Activated CD8-positive, alpha-beta T cell treated with anti-CD3 and anti-CD28 coated beads, Interleukin-2, amount 10 ng/mL, durations not matched to agents 7 days and 5 days (primary cell): ENCODE measurements at regions of chr21 and their contacts with region 1.

Region 1: GRCh38 chr21:45140346-45140940 is 66.1 kb downstream of the ADARB1 start:
- DNase-seq: peak; percentile 82
- ATAC-seq: peak; percentile 93
- H3K4me3 Mint-ChIP-seq: no peak overlapping the region
- H3K27ac Mint-ChIP-seq: no peak overlapping the region
- H3K4me1 Mint-ChIP-seq: peaks cover 10% of the 10 kb centered on the region
- H3K27me3 Mint-ChIP-seq: no peaks in the 10 kb centered on the region

Region 2: GRCh38 chr21:44949779-44950198 is 190.7 kb before region 1 on chr21:
- CTCF ChIA-PET with region 1: interaction called, 154 read pairs
- POLR2A ChIA-PET with region 1: no interaction called
- DNase-seq: peak; percentile 87
- ATAC-seq: peak; percentile 92
- H3K4me3 Mint-ChIP-seq: no peak overlapping the region
- H3K27ac Mint-ChIP-seq: no peak overlapping the region
- H3K4me1 Mint-ChIP-seq: peaks cover 9% of the 10 kb centered on the region
- H3K27me3 Mint-ChIP-seq: no peaks in the 10 kb centered on the region

Region 3: DNA sequence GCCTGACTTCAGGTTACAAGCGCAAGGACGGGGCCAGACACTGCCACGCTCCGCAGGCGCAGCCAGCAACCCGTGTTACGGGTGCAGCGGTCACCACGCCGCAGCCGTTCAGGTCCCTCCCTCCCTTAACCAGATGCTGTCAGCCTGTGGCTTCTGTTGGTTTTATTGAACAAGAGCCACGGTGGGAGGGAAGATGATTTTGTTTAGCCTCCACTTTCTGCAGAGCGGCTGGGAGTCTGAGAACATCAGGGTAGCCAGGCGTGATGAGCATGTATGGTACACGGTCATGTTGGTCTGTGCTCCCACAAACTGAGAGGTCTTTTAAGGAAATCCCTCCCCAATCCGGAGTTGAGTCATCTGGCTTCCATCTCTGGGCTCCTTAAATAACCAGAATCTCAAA is 84.6 kb before region 1 on chr21:
- CTCF ChIA-PET with region 1: interaction called, 16 read pairs
- POLR2A ChIA-PET with region 1: no interaction called
- DNase-seq: no peak
- ATAC-seq: no peak
- H3K4me3 Mint-ChIP-seq: no peak overlapping the region
- H3K27ac Mint-ChIP-seq: no peak overlapping the region
- H3K4me1 Mint-ChIP-seq: no peaks in the 10 kb centered on the region
- H3K27me3 Mint-ChIP-seq: peaks cover 27% of the 10 kb centered on the region

Region 4: GRCh38 chr21:45087022-45087823 is 53.2 kb before region 1 on chr21:
- CTCF ChIA-PET with region 1: interaction called, 35 read pairs
- POLR2A ChIA-PET with region 1: no interaction called
- DNase-seq: peak; percentile 72
- ATAC-seq: peak; percentile 59
- H3K4me3 Mint-ChIP-seq: peak overlapping the region; percentile 44
- H3K27ac Mint-ChIP-seq: peak overlapping the region; percentile 78
- H3K4me1 Mint-ChIP-seq: peaks cover 86% of the 10 kb centered on the region
- H3K27me3 Mint-ChIP-seq: no peaks in the 10 kb centered on the region

Region 5: DNA sequence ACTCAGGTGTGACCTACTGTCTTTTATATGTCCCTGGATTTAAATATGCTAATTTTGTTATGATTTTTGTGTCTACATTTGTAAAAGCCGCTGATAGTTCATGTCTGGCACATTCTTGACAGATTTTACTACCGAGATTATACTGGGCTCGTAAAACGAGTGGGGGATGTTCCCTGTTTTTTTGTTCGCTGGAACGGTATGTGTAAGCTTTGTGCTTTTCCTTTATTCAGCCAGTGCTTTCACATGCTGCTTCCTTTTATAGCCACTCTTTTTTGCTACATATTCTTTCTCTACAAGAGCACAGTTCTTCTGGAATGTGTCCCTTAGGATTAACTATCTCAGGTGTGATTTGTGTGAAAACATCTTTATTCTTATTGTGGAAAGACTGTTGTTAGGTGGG is 19.5 kb before region 1 on chr21:
- CTCF ChIA-PET with region 1: interaction called, 162 read pairs
- POLR2A ChIA-PET with region 1: no interaction called
- DNase-seq: no peak
- ATAC-seq: no peak
- H3K4me3 Mint-ChIP-seq: no peak overlapping the region
- H3K27ac Mint-ChIP-seq: no peak overlapping the region
- H3K4me1 Mint-ChIP-seq: peaks cover 23% of the 10 kb centered on the region
- H3K27me3 Mint-ChIP-seq: no peaks in the 10 kb centered on the region

Region 6: GRCh38 chr21:45167796-45168222 is 27.4 kb after region 1 on chr21:
- CTCF ChIA-PET with region 1: interaction called, 17 read pairs
- POLR2A ChIA-PET with region 1: no interaction called
- DNase-seq: no peak
- ATAC-seq: no peak
- H3K4me3 Mint-ChIP-seq: no peak overlapping the region
- H3K27ac Mint-ChIP-seq: no peak overlapping the region
- H3K4me1 Mint-ChIP-seq: peaks cover 23% of the 10 kb centered on the region
- H3K27me3 Mint-ChIP-seq: no peaks in the 10 kb centered on the region